ENCODE measurements at regions of chr22 and their contacts with region 1.

Region 1: GRCh38 chr22:26330966-26331625 is 98.0 kb upstream of the ASPHD2 start:
- DNase-seq: peak; percentile 81
- CTCF ChIP-seq: peak; percentile 90

Region 2: GRCh38 chr22:25452116-25452700 is 878.9 kb before region 1 on chr22:
- in situ Hi-C with region 1: loop called (anchors 25 kb)
- DNase-seq: no peak
- CTCF ChIP-seq: no peak

Region 3: DNA sequence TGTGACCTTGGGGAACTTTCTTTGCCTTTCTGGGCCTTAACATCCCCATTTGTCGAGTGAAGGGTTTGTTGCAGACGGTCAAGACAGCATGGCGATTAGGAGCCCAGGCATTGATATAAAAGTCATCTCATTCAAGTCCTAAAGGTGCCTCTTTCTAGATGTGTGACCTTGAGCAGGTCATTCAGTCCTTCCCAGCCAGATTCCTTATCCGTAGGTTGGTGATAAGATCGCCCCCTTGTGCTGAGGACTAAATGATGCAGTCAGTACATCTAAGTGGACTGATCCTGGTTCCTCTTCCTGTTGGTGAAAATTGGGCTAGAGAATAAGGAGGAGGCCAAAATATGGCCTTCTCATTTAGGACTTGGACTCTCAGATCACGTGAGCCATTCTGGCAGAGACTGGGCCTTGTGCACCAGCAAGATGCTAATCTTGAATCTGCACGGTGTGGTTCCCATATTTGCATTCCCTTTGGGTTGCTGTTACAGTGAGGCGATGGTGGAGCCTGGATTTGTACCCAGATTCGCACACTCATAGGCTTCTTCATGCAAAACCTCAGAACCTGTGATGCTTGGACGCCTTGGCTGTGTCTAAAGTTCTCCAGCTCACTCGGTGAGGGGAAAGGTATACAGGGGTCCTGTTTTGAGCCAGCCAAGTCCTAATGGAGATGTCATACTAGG is 432.3 kb before region 1 on chr22:
- in situ Hi-C with region 1: loop called (anchors 25 kb)
- DNase-seq: peak; percentile 12
- CTCF ChIP-seq: peak; percentile 31

Region 4: DNA sequence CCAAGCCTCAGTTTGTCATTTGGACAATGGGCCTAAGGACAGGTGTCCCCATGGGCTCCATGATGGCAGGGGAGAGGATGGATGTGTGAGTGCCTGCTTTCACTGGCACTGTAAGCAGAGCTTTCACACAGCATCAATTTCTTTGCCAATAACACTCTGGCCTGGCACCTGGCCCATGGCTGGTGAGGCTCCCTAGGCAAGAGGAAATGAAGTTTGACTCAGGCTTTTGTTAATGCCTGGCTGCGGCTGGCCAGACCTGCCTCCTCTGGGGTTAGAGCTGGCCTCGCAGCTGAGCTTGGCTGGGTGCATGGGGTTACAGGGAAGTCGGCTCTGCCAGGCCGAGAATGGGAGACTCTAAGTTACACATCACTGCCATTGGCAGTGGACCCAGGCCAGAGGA is 191.8 kb before region 1 on chr22:
- in situ Hi-C with region 1: no loop called
- DNase-seq: no peak
- CTCF ChIP-seq: no peak